Esophagus muscularis mucosa (tissue), 4 donors: ENCODE measurements at regions of chr1 and their contacts with region 1.

Region 1: DNA sequence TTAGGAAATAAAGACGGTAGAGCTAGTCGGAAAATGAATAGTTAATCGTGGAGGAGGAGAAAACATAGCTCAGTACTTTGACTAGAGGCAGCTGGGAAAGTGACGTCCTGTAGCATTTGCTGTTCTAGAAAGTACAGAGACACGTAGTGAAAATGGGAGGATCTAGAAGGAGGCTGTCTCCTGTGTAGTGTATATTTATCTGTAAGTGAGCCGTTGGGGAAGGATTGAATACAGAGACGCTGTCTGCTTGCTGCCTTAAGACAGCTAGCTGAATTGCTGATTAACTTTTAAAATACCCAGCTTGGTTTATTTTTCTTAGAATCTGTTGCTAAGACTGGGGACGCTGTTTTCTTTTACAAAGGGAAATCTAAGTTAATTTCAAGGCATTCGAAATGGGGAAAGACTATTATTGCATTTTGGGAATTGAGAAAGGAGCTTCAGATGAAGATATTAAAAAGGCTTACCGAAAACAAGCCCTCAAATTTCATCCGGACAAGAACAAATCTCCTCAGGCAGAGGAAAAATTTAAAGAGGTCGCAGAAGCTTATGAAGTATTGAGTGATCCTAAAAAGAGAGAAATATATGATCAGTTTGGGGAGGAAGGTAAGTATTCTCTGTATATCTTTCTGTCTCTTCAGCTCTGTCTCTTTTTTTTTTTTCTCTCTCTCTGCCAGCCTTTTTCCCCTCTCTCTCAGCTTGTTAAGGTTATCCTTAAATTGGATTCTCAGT is at the start of gene DNAJB4:
- DNase-seq: peak; percentile 92
- H3K4me3 ChIP-seq: peak within 1 kb of the TSS; percentile 62 to 68 (median 68)
- H3K27ac ChIP-seq: peak within 1 kb of the TSS; percentile 88 to 93 (median 89)
- H3K4me1 ChIP-seq: peaks cover 12 to 42% (median 36%) of the 10 kb centered on the region in 4 donors
- H3K27me3 ChIP-seq: no peaks in the 10 kb centered on the region
- CTCF ChIP-seq: peak in 1 of 3 experiments; percentile 10
- EP300 ChIP-seq: no peak
- POLR2A ChIP-seq: peak; percentile 91
- total RNA-seq, gene DNAJB4: 62.6 to 79.7 (median 70.4) TPM

Region 2: DNA sequence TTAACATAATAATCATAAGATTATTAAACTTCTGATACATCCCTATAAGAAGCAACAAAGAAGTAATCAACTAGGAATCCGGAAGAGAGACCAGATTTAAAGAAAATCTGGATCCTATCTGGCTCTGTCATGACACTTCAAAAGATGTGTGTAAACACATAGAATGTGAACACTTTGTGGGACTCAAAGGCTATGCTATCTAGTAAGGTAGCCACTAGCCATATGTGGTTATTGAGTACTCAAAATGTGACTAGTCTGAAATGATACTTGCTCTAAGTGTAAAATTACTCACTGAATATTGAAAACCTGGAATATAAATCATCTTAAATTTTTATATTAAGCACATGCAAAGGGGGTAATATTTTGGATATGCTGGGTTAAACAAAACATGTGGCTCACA is 34.7 kb before region 1 on chr1:
- intact Hi-C with region 1: no loop called
- DNase-seq: no peak
- H3K4me3 ChIP-seq: no peak overlapping the region
- H3K27ac ChIP-seq: no peak overlapping the region
- H3K4me1 ChIP-seq: peaks cover 37 to 72% (median 67%) of the 10 kb centered on the region in 4 donors
- H3K27me3 ChIP-seq: no peaks in the 10 kb centered on the region
- CTCF ChIP-seq: no peak
- EP300 ChIP-seq: no peak
- POLR2A ChIP-seq: no peak

Region 3: DNA sequence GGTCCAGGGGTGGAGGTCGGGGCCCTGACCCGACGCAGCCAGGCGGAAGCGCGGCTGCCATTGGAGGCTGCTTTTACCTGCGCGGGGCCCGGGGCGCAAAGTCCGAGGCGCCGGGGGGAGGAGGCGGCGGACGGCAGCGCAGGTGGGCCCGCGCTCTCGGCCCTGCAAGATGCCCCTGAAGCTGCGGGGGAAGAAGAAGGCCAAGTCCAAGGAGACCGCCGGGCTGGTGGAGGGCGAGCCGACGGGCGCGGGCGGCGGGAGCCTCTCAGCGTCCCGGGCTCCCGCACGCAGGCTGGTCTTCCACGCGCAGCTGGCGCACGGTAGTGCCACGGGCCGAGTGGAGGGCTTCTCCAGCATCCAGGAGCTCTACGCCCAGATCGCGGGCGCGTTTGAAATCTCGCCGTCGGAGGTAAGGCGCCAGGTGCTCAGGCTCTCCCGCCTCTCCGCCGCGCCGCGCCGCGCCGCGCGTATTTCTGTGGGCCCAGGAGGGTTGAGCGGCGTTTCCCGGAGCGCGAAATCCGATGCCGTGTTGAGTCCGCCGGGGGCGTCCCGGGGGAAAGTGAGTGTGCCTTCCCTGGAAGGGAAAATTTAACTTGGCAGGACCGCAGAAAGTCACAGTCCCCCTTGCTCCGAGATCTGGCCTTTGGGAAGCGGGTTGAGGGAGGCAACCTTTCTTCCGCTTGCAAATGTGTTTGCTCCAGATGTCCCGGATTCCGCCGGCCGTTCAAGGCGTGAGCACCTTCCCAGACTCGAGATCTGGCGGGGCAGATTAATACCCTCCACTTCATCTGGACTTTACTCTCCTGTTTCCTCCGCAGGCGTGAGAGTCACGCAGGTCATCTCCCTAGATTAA is 41.3 kb after region 1 on chr1 and contains the start of gene GIPC2:
- intact Hi-C with region 1: loop called (anchors 5 kb)
- DNase-seq: no peak
- H3K4me3 ChIP-seq: peak within 1 kb of the TSS; percentile 72 to 79 (median 76)
- H3K27ac ChIP-seq: peak within 1 kb of the TSS; percentile 79 to 88 (median 86)
- H3K4me1 ChIP-seq: peaks cover 6 to 65% (median 54%) of the 10 kb centered on the region in 4 donors
- H3K27me3 ChIP-seq: no peaks in the 10 kb centered on the region
- CTCF ChIP-seq: no peak
- EP300 ChIP-seq: no peak
- POLR2A ChIP-seq: no peak
- total RNA-seq, gene GIPC2: 4.5 to 8.7 (median 6.8) TPM

Region 4: GRCh38 chr1:78586572-78586971 is 581.7 kb after region 1 on chr1:
- intact Hi-C with region 1: no loop called
- DNase-seq: no peak
- H3K4me3 ChIP-seq: no peak overlapping the region
- H3K27ac ChIP-seq: no peak overlapping the region
- H3K4me1 ChIP-seq: no peaks in the 10 kb centered on the region
- H3K27me3 ChIP-seq: no peaks in the 10 kb centered on the region
- CTCF ChIP-seq: no peak
- EP300 ChIP-seq: no peak
- POLR2A ChIP-seq: no peak